ENCODE measurements at regions of chrX and their contacts with region 1.

Region 1: GRCh38 chrX:31036895-31037294 is 34.9 kb downstream of the FTHL17 start:
- DNase-seq: peak; percentile 32
- CTCF ChIP-seq: peak; percentile 58

Region 2: GRCh38 chrX:31271615-31272471 is 234.9 kb after region 1 on chrX:
- in situ Hi-C with region 1: no loop called
- DNase-seq: no peak
- CTCF ChIP-seq: no peak

Region 3: DNA sequence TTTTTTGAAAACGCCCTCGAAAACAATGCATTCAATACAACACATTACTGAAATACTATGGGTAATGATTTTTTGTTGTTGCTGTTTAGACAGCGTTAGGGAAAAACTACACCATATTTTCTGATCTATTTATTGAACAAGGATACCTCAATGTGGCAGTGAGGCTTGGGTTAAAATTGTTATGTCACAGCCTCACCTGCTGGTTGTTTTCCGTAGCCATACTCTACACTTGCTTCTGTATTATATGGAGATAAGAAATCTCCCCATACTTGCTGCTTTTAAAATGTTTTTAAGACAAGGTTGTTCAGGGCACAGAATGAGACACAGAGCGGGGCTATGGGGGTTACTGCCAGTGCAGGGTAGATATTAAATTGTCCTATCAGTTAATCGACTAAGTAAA is 256.5 kb after region 1 on chrX:
- in situ Hi-C with region 1: loop called (anchors 10 kb)
- DNase-seq: peak; percentile 8
- CTCF ChIP-seq: peak; percentile 40

Region 4: DNA sequence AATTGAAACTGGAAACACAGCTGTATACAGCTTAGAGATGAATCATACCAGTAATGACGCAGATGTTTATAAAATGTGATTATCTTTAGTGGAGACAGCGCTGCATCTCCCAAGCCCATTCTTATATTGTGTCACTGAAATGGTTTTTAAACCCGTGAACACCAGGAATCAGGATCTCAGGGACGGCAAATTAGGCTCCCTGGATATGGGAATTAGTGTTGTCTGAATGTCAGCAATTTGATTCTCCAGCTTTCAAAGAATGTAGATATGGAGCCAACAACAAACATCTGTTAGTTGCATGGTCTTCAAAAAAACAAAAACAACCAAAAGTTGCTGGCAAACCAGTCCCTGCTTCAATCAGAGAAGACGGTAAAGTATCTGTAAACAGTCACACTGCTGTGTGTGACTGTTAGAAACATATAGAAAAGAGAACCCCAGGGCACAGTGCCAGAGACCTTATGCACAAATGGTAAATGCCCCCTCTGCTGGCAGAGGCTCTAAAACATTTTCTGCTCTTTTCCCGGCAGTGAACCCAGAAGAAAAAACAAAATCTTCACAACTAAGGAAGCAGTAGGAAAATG is 386.8 kb after region 1 on chrX:
- in situ Hi-C with region 1: loop called (anchors 25 kb)
- DNase-seq: no peak
- CTCF ChIP-seq: no peak